CD4-positive, alpha-beta T cell (primary cell): ENCODE measurements at regions of chr4 and their contacts with region 1.

Region 1: GRCh38 chr4:183407128-183407585 is 37.3 kb upstream of the CDKN2AIP start:
- DNase-seq: peak; percentile 82 to 93 (median 90)
- ATAC-seq: peak; percentile 94
- H3K4me3 ChIP-seq: peak overlapping the region; percentile 69
- H3K4me3 Mint-ChIP-seq: peak overlapping the region; percentile 81
- H3K27ac ChIP-seq: peak overlapping the region; percentile 25 to 58
- H3K27ac Mint-ChIP-seq: peak overlapping the region; percentile 80
- H3K4me1 ChIP-seq: peaks cover 10% of the 10 kb centered on the region
- H3K4me1 Mint-ChIP-seq: peaks cover 5% of the 10 kb centered on the region
- H3K27me3 ChIP-seq: no peaks in the 10 kb centered on the region
- H3K27me3 Mint-ChIP-seq: no peaks in the 10 kb centered on the region
- CTCF ChIP-seq: peak; percentile 84

Region 2: DNA sequence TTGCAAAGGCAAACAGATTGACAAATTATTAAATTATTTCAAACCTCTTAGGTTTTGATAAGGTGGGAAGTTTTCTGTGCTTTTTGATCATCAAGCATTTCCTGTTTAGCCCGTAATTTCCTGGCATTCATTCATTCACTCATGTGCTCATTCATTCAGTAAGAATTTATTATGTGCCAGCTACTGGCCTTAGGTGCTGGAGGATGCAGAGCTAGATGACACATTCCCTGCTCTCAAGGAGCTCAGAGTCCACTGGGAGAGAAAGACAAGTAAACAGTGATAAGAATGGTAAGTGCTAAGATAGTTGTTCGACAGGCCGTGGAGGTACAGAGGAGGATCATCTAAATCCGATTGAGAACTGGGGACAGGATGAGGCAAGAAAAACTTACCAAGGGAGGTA is 643.0 kb before region 1 on chr4:
- CTCF ChIA-PET with region 1: no interaction called
- POLR2A ChIA-PET with region 1: no interaction called
- intact Hi-C with region 1: no loop called
- DNase-seq: no peak
- ATAC-seq: no peak
- H3K4me3 ChIP-seq: no peak overlapping the region
- H3K4me3 Mint-ChIP-seq: no peak overlapping the region
- H3K27ac ChIP-seq: no peak overlapping the region
- H3K27ac Mint-ChIP-seq: no peak overlapping the region
- H3K4me1 ChIP-seq: no peaks in the 10 kb centered on the region
- H3K4me1 Mint-ChIP-seq: no peaks in the 10 kb centered on the region
- H3K27me3 ChIP-seq: peaks cover 2 to 8% of the 10 kb centered on the region in 2 experiments
- H3K27me3 Mint-ChIP-seq: peaks cover 19% of the 10 kb centered on the region
- CTCF ChIP-seq: no peak

Region 3: GRCh38 chr4:182938205-182938645 is 468.9 kb before region 1 on chr4:
- CTCF ChIA-PET with region 1: no interaction called
- POLR2A ChIA-PET with region 1: no interaction called
- intact Hi-C with region 1: loop called in 1 of 2 experiments (anchors 5 kb)
- DNase-seq: peak; percentile 22 to 77 (median 56)
- ATAC-seq: peak; percentile 82
- H3K4me3 ChIP-seq: no peak overlapping the region
- H3K4me3 Mint-ChIP-seq: no peak overlapping the region
- H3K27ac ChIP-seq: no peak overlapping the region
- H3K27ac Mint-ChIP-seq: no peak overlapping the region
- H3K4me1 ChIP-seq: peaks cover 4% of the 10 kb centered on the region
- H3K4me1 Mint-ChIP-seq: peaks cover 6% of the 10 kb centered on the region
- H3K27me3 ChIP-seq: no peaks in the 10 kb centered on the region
- H3K27me3 Mint-ChIP-seq: peaks cover 15% of the 10 kb centered on the region
- CTCF ChIP-seq: peak; percentile 87

Region 4: GRCh38 chr4:183074296-183074990 is 332.7 kb before region 1 on chr4:
- CTCF ChIA-PET with region 1: no interaction called
- POLR2A ChIA-PET with region 1: no interaction called
- intact Hi-C with region 1: loop called in 1 of 2 experiments (anchors 5 kb)
- DNase-seq: no peak
- ATAC-seq: no peak
- H3K4me3 ChIP-seq: no peak overlapping the region
- H3K4me3 Mint-ChIP-seq: no peak overlapping the region
- H3K27ac ChIP-seq: no peak overlapping the region
- H3K27ac Mint-ChIP-seq: no peak overlapping the region
- H3K4me1 ChIP-seq: no peaks in the 10 kb centered on the region
- H3K4me1 Mint-ChIP-seq: no peaks in the 10 kb centered on the region
- H3K27me3 ChIP-seq: no peaks in the 10 kb centered on the region
- H3K27me3 Mint-ChIP-seq: peaks cover 5% of the 10 kb centered on the region
- CTCF ChIP-seq: no peak

Region 5: DNA sequence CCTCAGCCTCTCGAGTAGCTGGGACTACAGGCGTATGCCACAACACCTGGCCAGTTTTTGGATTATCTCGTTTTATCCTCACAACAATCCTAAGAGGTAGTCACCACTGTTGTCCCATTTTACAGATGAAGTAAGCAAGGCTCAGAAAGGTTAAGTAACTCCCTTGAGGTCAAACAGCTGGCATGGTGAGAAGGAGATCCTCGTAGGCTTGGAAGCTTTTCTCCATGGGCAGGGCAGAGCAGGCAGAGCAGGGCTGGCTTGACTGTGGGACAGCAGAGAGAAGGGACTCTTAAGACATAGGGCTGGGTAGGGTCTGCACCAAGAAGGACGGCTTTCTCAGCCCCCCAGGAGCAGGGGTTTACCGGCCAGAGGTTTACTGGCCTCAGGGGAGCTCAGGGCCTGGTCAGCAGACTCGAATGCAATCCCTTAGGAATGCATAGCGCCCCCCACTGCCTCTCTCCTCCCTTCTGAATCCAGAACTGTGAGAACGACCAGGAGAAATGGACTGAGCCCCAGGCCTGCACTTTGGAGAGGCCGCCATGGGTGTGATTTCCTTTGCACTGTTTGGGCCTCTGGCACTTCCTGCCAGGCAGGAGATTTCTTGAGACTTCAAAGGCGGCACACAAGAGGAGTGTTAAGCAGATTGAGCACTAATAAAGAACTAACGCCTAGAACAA is 23.3 kb after region 1 on chr4:
- CTCF ChIA-PET with region 1: interaction called, 12 read pairs
- POLR2A ChIA-PET with region 1: interaction called, 10 read pairs
- intact Hi-C with region 1: no loop called
- DNase-seq: peak in 12 of 14 experiments; percentile 10 to 63 (median 34)
- ATAC-seq: peak; percentile 93
- H3K4me3 ChIP-seq: no peak overlapping the region
- H3K4me3 Mint-ChIP-seq: peak overlapping the region; percentile 72
- H3K27ac ChIP-seq: peak overlapping the region in 1 of 2 donors; percentile 59
- H3K27ac Mint-ChIP-seq: peak overlapping the region; percentile 81
- H3K4me1 ChIP-seq: peaks cover 38% of the 10 kb centered on the region
- H3K4me1 Mint-ChIP-seq: peaks cover 42% of the 10 kb centered on the region
- H3K27me3 ChIP-seq: no peaks in the 10 kb centered on the region
- H3K27me3 Mint-ChIP-seq: no peaks in the 10 kb centered on the region
- CTCF ChIP-seq: no peak

Region 6: DNA sequence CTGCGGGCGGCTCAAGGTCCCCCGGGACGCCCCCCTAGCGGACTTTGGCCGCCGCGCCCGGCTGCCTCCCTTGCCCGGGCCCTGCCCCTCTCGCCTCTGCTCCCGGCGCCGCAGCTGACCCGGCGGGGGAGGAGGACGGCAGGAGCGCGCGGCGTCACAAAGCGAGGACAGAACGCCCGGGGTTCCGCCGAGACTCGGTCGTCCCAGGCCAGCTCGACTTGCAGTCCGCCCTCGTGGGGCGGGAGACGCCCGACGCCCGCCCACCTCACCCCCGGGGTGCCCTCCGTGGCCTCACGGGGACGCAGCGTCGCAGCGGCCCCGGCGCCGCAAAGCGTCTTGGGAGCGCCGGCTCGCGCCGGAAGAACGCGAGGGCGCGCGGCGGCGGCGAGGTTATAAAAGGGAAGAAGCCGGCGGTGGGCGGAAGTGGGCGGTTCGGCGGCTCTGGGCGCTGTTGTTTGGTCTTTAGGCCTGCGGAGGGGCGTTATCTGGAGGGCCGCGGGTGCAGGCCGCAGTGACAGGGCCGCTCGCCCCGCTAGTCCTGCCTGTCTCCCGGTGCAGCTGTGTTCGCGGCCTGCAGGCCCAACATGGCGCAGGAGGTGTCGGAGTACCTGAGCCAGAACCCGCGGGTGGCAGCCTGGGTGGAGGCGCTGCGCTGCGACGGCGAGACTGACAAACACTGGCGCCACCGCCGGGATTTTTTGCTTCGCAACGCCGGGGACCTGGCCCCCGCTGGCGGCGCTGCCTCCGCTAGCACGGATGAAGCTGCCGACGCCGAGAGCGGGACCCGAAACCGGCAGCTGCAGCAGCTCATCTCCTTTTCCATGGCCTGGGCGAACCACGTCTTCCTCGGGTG is 37.3 kb after region 1 on chr4 and contains the start of gene CDKN2AIP:
- CTCF ChIA-PET with region 1: interaction called, 18 read pairs
- POLR2A ChIA-PET with region 1: interaction called, 47 read pairs
- intact Hi-C with region 1: loop called (anchors 2 to 5 kb)
- DNase-seq: peak; percentile 89 to 98 (median 94)
- ATAC-seq: peak; percentile 82
- H3K4me3 ChIP-seq: peak within 1 kb of the TSS; percentile 94
- H3K4me3 Mint-ChIP-seq: peak within 1 kb of the TSS; percentile 98
- H3K27ac ChIP-seq: peak within 1 kb of the TSS; percentile 91
- H3K27ac Mint-ChIP-seq: peak within 1 kb of the TSS; percentile 96
- H3K4me1 ChIP-seq: peaks cover 26% of the 10 kb centered on the region
- H3K4me1 Mint-ChIP-seq: peaks cover 55% of the 10 kb centered on the region
- H3K27me3 ChIP-seq: no peaks in the 10 kb centered on the region
- H3K27me3 Mint-ChIP-seq: no peaks in the 10 kb centered on the region
- CTCF ChIP-seq: no peak
- total RNA-seq, gene CDKN2AIP: 55.7 to 56.9 TPM